Activated CD4-positive, alpha-beta memory T cell treated with anti-CD3 and anti-CD28 coated beads for 36 hours (primary cell): ENCODE measurements at regions of chr7 and their contacts with region 1.

Region 1: DNA sequence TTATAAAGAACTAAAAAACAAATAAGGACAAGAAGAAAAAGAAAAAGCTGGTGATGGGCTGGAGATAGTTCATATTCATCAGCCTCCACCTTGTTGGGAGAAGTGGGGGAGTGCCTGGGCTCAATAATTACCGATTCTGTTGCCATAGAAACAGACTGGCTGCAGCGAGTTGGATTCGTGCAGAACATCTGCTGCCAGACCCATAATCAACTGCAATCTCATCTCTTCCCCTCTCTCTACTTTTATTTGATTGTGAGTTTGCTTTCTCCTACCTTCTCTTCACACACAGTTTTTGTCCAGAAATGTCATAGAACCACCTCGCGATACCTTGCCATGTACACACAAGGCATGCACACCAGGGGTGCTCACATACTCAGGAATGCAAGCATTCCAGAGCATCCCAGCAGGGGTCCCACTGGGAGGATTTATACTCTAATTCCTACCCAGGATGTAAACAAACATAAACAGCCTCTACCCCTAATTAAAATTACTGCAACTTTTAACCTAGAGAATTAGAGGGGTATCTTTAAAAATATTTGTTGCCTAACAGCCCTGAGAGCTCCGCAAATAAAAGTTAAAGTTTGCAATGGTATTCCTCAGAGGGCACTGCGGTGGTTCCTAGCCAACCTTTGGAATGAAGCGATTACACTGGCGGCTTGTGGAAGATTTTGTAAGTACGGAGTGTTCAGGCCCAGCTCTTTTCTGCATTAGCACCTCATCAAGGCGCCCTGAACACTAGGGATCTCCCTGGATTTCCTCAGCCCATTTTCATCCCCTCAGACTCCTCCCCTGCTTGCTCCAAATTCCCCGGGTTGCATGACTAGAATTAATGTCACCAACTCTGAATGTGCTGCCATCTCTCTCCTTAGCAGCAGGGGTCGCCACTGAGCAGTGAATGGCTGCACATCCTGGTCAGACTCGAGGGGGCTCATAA is 262.4 kb upstream of the AOAH start:
- DNase-seq: peak; percentile 73
- H3K4me3 Mint-ChIP-seq: no peak overlapping the region
- H3K27ac Mint-ChIP-seq: no peak overlapping the region
- H3K4me1 Mint-ChIP-seq: peaks cover 16% of the 10 kb centered on the region
- H3K27me3 Mint-ChIP-seq: no peaks in the 10 kb centered on the region

Region 2: DNA sequence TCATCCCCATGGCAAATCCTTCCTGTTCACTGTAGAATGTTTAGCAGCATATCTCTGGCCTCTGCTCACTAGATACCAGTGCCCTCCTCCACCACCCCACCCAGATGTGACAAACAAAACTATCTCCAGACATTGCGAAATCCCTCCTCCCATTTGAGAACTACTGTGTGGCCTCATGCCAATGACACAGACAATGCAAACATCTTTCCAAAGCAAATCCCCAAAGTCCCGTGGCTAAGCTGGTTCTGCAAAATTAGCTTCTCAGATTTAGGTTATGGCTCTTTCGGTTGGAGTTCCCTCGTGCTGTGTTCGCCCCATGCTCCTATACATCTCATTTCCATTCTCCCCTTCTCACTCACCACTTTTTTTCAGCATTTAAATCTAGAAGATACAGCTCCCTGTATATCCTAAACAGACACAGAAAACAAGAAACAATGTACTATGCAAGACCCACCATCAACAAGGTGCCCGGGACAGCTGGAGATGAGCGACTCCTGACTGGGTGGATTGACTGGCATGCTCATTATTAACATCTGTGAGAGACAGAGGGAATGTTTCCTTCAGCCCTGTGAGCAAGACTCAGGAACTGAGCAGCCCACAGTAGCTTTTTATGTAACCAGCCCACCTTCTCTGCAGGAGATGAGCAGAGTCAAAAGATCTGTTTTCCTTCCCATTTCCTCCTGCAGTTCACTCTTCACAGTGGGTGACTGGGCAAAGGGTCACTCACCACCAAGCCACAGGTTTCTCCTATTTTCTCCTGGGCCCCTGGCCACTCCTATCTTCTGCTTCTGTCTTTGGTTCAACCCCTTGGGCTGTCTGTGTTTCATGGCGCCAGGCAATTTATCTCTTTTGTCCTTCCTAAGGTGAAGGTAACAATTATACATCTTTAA is 36.7 kb before region 1 on chr7:
- CTCF ChIA-PET with region 1: no interaction called
- POLR2A ChIA-PET with region 1: no interaction called
- intact Hi-C with region 1: no loop called
- DNase-seq: no peak
- H3K4me3 Mint-ChIP-seq: no peak overlapping the region
- H3K27ac Mint-ChIP-seq: no peak overlapping the region
- H3K4me1 Mint-ChIP-seq: no peaks in the 10 kb centered on the region
- H3K27me3 Mint-ChIP-seq: no peaks in the 10 kb centered on the region

Region 3: GRCh38 chr7:36967387-36967786 is 19.3 kb before region 1 on chr7:
- CTCF ChIA-PET with region 1: interaction called, 12 read pairs
- POLR2A ChIA-PET with region 1: interaction called, 3 read pairs
- intact Hi-C with region 1: no loop called
- DNase-seq: no peak
- H3K4me3 Mint-ChIP-seq: no peak overlapping the region
- H3K27ac Mint-ChIP-seq: no peak overlapping the region
- H3K4me1 Mint-ChIP-seq: peaks cover 53% of the 10 kb centered on the region
- H3K27me3 Mint-ChIP-seq: no peaks in the 10 kb centered on the region

Region 4: DNA sequence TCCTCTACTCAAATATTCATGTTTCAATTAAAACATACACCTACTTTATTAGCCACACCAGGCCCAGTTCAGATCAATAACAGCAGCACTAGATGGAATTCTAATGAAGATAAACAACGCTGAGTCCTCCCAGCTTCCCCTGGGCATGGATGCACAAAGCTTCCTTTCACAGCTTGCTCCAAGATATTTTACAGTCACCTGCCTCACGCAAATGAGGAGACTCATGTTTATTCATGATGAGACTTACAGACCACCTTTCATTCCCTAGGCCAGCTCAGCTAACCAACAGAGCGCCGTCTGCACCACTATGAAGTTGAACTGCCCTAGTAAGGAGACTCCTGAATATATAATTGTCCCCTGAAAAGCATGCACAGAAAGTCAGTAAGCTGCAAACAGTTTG is 20.6 kb after region 1 on chr7:
- CTCF ChIA-PET with region 1: interaction called, 11 read pairs
- POLR2A ChIA-PET with region 1: no interaction called
- intact Hi-C with region 1: no loop called
- DNase-seq: no peak
- H3K4me3 Mint-ChIP-seq: no peak overlapping the region
- H3K27ac Mint-ChIP-seq: no peak overlapping the region
- H3K4me1 Mint-ChIP-seq: no peaks in the 10 kb centered on the region
- H3K27me3 Mint-ChIP-seq: no peaks in the 10 kb centered on the region

Region 5: GRCh38 chr7:37201003-37201875 is 214.5 kb after region 1 on chr7:
- CTCF ChIA-PET with region 1: interaction called, 14 read pairs
- POLR2A ChIA-PET with region 1: no interaction called
- intact Hi-C with region 1: loop called (anchors 5 kb)
- DNase-seq: peak; percentile 62
- H3K4me3 Mint-ChIP-seq: no peak overlapping the region
- H3K27ac Mint-ChIP-seq: no peak overlapping the region
- H3K4me1 Mint-ChIP-seq: peaks cover 11% of the 10 kb centered on the region
- H3K27me3 Mint-ChIP-seq: no peaks in the 10 kb centered on the region

Region 6: DNA sequence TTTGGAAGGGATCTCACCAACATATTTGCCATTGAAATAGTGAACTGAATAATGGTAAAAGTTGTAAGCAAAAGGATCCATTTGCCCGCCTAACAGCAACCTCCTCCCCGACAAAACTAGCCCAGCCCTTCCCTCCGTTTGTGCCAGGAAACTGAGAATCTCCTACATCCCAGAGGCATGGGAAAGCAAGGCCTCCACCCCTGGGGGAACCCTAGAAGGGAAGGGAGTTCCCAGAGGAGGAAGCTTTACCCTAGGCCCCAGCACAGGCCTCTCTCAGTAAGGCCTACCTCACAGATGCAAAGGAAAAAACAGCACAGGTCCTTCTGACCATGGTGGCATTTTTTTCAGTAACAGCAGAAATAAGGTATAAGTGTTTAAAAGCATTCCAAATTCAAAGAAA is 232.3 kb after region 1 on chr7:
- CTCF ChIA-PET with region 1: no interaction called
- POLR2A ChIA-PET with region 1: no interaction called
- intact Hi-C with region 1: no loop called
- DNase-seq: no peak
- H3K4me3 Mint-ChIP-seq: no peak overlapping the region
- H3K27ac Mint-ChIP-seq: peak overlapping the region; percentile 62
- H3K4me1 Mint-ChIP-seq: peaks cover 6% of the 10 kb centered on the region
- H3K27me3 Mint-ChIP-seq: no peaks in the 10 kb centered on the region